ENCODE measurements at regions of chr10 and their contacts with region 1.

Region 1: DNA sequence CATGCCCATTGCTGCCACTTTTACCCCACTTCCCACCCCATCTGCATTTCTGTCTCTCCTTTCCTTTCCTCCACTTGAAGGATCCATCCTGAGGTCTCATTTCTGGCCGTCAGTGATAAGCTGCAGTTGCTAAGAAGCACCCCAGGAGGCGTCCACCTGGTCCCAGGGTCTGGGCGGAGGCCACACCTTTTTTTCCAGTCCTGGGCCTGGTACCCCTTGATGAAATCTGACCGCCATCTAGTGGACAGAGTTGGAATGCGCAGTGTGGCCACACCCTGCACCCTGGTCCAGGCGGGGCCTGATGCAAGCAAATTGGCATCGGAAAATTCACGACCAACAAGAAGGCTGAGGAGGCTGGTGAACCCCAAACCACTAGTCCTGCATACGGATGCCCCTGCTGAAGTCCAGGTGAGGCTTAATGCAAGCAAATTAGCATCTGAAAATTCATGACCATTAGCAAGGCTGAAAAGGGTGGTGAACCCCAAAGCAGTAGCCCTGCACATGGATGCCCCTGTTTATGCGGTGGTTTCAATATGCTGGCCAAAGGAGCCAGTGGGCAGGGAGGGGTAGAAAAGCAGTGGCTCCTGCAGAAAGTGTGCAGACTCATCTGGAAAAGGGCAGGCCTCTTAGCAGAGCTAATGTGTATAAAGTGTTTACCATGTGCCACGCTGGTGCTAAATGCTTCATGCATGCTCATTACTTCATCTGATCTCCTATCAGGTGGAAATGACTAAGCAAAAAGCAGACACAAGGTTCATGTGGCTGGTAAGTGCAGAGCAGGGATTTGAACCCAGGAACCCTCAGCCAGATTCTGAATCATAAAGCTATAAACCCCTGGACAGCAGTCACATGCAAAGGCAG is 43.2 kb downstream of the GPAM start:
- DNase-seq: peak; percentile 94
- ATAC-seq: peak; percentile 96
- H3K4me3 Mint-ChIP-seq: no peak overlapping the region
- H3K27ac Mint-ChIP-seq: no peak overlapping the region
- H3K4me1 Mint-ChIP-seq: peaks cover 7% of the 10 kb centered on the region; the same call in 1 of the 2 replicates
- H3K27me3 Mint-ChIP-seq: no peaks in the 10 kb centered on the region; the same call in 1 of the 2 replicates
- CTCF ChIP-seq: peak; percentile 90

Region 2: GRCh38 chr10:111756217-111757061 is 383.9 kb before region 1 on chr10:
- CTCF ChIA-PET with region 1: interaction called, 34 read pairs
- POLR2A ChIA-PET with region 1: no interaction called
- DNase-seq: peak; percentile 74
- ATAC-seq: peak; percentile 99
- H3K4me3 Mint-ChIP-seq: no peak overlapping the region
- H3K27ac Mint-ChIP-seq: no peak overlapping the region
- H3K4me1 Mint-ChIP-seq: peaks cover 10% of the 10 kb centered on the region
- H3K27me3 Mint-ChIP-seq: peaks cover 11% of the 10 kb centered on the region
- CTCF ChIP-seq: peak; percentile 23; the same call in 1 of the 2 replicates

Region 3: DNA sequence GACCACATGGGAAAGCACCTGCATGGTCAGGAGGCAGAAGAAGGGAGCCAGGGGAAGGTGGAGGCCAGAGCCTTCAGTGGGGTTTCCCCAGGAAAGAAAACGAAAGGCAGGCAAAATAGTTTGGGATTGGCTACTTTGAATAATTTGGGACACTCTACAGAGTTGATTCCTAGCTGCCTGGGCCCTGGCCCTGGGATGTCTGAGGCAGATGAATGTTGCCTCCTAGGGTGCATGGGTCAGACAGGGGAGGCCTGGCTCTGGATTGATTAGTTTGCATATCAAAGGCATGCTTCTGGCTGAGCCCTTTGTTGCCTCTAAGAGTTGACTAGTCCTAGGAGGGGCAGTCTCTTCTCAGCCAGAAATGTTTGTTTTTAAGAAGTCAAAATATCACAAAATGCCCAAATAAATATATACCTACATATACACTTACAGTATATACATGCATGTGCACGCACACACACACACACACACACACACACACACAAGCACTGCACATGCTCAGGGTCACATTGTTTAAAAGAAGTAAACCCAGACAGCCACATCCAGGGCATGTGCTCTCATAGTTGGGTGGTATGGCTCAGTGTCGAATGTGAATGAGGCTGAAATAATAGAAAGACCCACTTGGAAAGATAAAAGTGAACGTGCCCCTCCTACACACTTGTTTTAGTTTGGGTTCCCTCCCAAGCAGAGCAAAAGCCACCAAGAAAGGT is 141.0 kb before region 1 on chr10:
- CTCF ChIA-PET with region 1: interaction called, 13 read pairs
- POLR2A ChIA-PET with region 1: no interaction called
- DNase-seq: peak; percentile 51
- ATAC-seq: peak; percentile 97
- H3K4me3 Mint-ChIP-seq: no peak overlapping the region
- H3K27ac Mint-ChIP-seq: peak overlapping the region; percentile 81; the same call in 1 of the 2 replicates
- H3K4me1 Mint-ChIP-seq: peaks cover 31% of the 10 kb centered on the region
- H3K27me3 Mint-ChIP-seq: peaks cover 7% of the 10 kb centered on the region
- CTCF ChIP-seq: no peak

Region 4: GRCh38 chr10:112115799-112116385 is 24.4 kb before region 1 on chr10:
- CTCF ChIA-PET with region 1: interaction called, 75 read pairs
- POLR2A ChIA-PET with region 1: interaction called, 3 read pairs
- DNase-seq: peak; percentile 72
- ATAC-seq: peak; percentile 93
- H3K4me3 Mint-ChIP-seq: no peak overlapping the region
- H3K27ac Mint-ChIP-seq: no peak overlapping the region
- H3K4me1 Mint-ChIP-seq: peaks cover 13% of the 10 kb centered on the region
- H3K27me3 Mint-ChIP-seq: no peaks in the 10 kb centered on the region
- CTCF ChIP-seq: peak; percentile 66

Region 5: DNA sequence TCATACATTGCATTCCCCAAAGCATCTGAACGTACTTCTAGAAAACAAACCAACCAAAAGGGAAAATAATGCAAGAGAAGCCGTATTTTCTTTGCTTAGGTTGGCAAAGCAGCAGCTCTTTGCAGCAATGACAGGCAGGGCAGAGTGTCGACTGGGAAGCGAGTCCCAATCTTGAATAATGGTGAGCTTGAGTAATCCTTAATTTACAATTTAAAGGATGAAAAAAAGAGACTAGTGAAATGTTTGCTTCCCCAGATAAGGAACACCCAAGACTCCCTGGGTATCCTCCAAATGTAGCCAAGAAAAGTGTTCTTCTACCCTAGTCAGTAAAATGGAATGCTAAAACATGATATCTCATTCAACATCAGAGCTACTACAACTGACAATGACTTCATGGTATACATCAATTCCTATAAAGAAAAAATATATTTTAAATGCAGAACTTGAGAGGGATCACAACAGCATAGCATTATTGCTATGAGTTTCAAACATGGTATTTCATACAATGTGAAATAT is 11.2 kb after region 1 on chr10:
- CTCF ChIA-PET with region 1: interaction called, 15 read pairs
- POLR2A ChIA-PET with region 1: no interaction called
- DNase-seq: no peak
- ATAC-seq: no peak
- H3K4me3 Mint-ChIP-seq: no peak overlapping the region
- H3K27ac Mint-ChIP-seq: no peak overlapping the region
- H3K4me1 Mint-ChIP-seq: 0 out of 2 replicates have a peak, but pooled peaks cover 2% of the 10 kb centered on the region
- H3K27me3 Mint-ChIP-seq: no peaks in the 10 kb centered on the region
- CTCF ChIP-seq: no peak

Region 6: DNA sequence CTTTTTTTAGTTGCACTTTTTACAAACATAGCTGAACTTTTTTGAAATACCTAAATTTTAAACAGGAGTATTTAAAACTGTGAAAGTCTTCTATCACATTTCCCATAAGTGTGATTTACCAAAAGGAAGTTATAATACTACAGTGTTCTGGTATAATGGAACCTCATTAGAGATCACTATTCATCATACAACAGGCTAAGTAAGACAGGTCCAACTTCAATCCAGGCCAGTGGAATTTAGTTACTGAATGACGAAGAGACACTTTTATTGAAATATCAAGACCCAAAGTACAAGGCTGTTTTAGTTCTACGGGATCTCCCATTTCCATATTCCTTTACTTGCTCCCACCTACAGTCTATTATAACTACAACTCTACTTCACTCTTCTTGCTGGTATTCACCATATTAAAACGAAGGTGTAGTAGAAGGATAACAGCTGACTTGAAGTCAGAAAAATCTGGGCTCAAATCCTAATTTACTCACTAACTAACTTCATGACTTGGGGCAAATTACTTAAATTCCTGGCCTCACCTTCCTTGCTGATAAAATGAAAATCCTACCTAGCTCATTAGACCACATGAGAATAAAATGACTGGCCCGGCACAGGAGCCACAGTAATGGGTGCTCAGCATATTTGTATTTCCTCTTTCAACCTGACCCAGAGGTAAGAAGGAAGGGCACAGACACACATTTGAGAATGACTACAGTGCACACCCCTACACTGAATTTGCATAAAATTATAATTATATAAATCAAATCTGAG is 21.6 kb after region 1 on chr10:
- CTCF ChIA-PET with region 1: no interaction called
- POLR2A ChIA-PET with region 1: no interaction called
- DNase-seq: no peak
- ATAC-seq: no peak
- H3K4me3 Mint-ChIP-seq: no peak overlapping the region
- H3K27ac Mint-ChIP-seq: no peak overlapping the region
- H3K4me1 Mint-ChIP-seq: no peaks in the 10 kb centered on the region
- H3K27me3 Mint-ChIP-seq: no peaks in the 10 kb centered on the region
- CTCF ChIP-seq: no peak

Region 7: GRCh38 chr10:112191791-112192190 is 51.5 kb after region 1 on chr10:
- CTCF ChIA-PET with region 1: no interaction called
- POLR2A ChIA-PET with region 1: no interaction called
- DNase-seq: no peak
- ATAC-seq: no peak
- H3K4me3 Mint-ChIP-seq: no peak overlapping the region
- H3K27ac Mint-ChIP-seq: no peak overlapping the region
- H3K4me1 Mint-ChIP-seq: no peaks in the 10 kb centered on the region
- H3K27me3 Mint-ChIP-seq: peaks cover 4% of the 10 kb centered on the region; the same call in 1 of the 2 replicates
- CTCF ChIP-seq: no peak

Region 8: DNA sequence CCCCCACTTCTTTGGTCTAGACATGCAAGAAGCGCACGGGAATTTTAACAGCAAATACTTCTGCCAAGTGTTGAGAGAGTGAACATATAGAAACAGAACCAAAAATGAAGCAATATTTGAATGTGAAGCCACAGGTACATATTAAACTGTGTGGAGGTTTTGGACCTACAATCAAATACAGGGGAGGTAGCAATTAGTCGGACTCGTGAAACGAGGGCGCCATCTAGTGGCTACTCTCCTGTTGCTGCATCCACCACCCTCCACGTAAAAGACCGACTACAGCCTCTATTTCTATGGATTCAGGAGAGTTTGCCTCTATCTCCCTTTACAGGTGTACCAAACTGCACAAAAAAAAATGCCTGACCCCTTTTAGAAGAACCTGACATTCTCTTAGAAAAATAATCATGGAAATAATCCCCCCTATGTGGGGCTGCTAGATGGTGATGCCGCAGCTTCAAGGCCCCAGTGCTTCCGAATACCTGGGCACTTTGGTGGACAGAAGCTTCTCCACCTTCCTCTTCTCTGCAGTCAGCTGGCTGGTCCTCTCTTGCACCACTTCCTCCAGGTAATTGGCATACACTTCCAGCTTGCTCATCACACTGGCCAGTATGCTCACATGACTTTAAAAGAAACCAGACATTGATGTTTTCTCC is 174.6 kb after region 1 on chr10:
- CTCF ChIA-PET with region 1: interaction called, 37 read pairs
- POLR2A ChIA-PET with region 1: no interaction called
- DNase-seq: peak; percentile 84
- ATAC-seq: peak; percentile 94
- H3K4me3 Mint-ChIP-seq: no peak overlapping the region
- H3K27ac Mint-ChIP-seq: no peak overlapping the region
- H3K4me1 Mint-ChIP-seq: no peaks in the 10 kb centered on the region
- H3K27me3 Mint-ChIP-seq: no peaks in the 10 kb centered on the region
- CTCF ChIP-seq: peak; percentile 81

Measured in WTC11 (cell line).